Heart left ventricle (tissue), 16 donors: ENCODE measurements at regions of chr19 and their contacts with region 1.

Region 1: GRCh38 chr19:16111160-16111908 is at the start of gene RAB8A:
- DNase-seq: peak; percentile 99 to 100 (median 99)
- ATAC-seq: peak; percentile 98 to 99 (median 98)
- H3K4me3 ChIP-seq: peak within 1 kb of the TSS; percentile 73 to 99 (median 83)
- H3K27ac ChIP-seq: peak within 1 kb of the TSS in 11 of 12 donors; percentile 81 to 97 (median 89)
- H3K4me1 ChIP-seq: peaks cover 4 to 49% (median 29%) of the 10 kb centered on the region in 12 donors
- H3K27me3 ChIP-seq: no peaks in the 10 kb centered on the region
- CTCF ChIP-seq: peak; percentile 93 to 99 (median 98)
- POLR2A ChIP-seq: no peak
- total RNA-seq, gene RAB8A: 10.9 to 53.7 (median 23.7) TPM

Region 2: GRCh38 chr19:16076154-16076957 is 35.0 kb before region 1 on chr19 and contains the start of gene TPM4:
- intact Hi-C with region 1: loop called in 4 of 10 experiments (anchors 5 kb)
- DNase-seq: peak; percentile 92 to 97 (median 95)
- ATAC-seq: peak; percentile 85 to 91 (median 87)
- H3K4me3 ChIP-seq: peak within 1 kb of the TSS; percentile 79 to 99 (median 96)
- H3K27ac ChIP-seq: peak within 1 kb of the TSS; percentile 97 to 100 (median 100)
- H3K4me1 ChIP-seq: peaks cover 0 to 57% (median 33%) of the 10 kb centered on the region in 12 donors
- H3K27me3 ChIP-seq: peaks cover 0 to 6% (median 0%) of the 10 kb centered on the region in 9 donors
- CTCF ChIP-seq: no peak
- POLR2A ChIP-seq: peak; percentile 76 to 81
- total RNA-seq, gene TPM4: 49.2 to 260 (median 92.1) TPM

Region 3: GRCh38 chr19:16153582-16154336 is 42.4 kb after region 1 on chr19:
- intact Hi-C with region 1: no loop called
- DNase-seq: no peak
- ATAC-seq: no peak
- H3K4me3 ChIP-seq: no peak overlapping the region
- H3K27ac ChIP-seq: no peak overlapping the region
- H3K4me1 ChIP-seq: peaks cover 0 to 24% (median 0%) of the 10 kb centered on the region in 12 donors
- H3K27me3 ChIP-seq: peaks cover 0 to 11% (median 0%) of the 10 kb centered on the region in 9 donors
- CTCF ChIP-seq: no peak
- POLR2A ChIP-seq: no peak

Region 4: DNA sequence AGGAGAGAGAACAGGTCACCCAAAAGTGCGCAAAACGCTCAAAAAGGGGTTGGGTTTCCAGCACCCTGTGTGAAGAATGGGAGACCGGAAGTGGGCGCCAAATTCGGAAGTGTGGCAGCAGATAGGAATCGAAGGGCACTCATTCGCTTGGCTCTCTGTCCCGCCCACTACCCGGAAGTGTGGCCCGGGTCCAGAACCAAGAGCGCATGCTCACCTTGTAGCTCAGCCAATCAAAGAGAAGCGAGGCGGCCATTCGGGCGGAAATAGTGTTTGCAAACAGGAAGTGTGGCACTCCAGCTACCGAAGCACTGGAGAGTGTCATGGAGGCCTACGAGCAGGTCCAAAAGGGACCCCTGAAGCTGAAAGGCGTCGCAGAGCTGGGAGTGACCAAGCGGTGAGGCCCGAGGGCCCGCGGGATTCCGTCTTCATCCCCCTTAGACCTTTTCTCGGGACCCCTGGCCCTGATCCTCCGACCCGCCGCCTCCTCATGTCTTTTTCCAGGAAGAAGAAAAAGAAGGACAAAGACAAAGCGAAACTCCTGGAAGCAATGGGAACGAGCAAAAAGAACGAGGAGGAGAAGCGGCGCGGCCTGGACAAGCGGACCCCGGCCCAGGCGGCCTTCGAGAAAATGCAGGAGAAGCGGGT is 73.9 kb after region 1 on chr19 and contains the start of gene FAM32A:
- intact Hi-C with region 1: loop called in 6 of 10 experiments (anchors 2 to 5 kb)
- DNase-seq: peak; percentile 99
- ATAC-seq: peak; percentile 94 to 99 (median 98)
- H3K4me3 ChIP-seq: peak within 1 kb of the TSS; percentile 66 to 99 (median 91)
- H3K27ac ChIP-seq: peak within 1 kb of the TSS; percentile 72 to 92 (median 82)
- H3K4me1 ChIP-seq: peaks cover 3 to 41% (median 16%) of the 10 kb centered on the region in 12 donors
- H3K27me3 ChIP-seq: peaks cover 0 to 9% (median 0%) of the 10 kb centered on the region in 9 donors
- CTCF ChIP-seq: peak in 10 of 12 donors; percentile 7 to 51 (median 25)
- POLR2A ChIP-seq: peak in 1 of 2 donors; percentile 74
- total RNA-seq, gene FAM32A: 32.0 to 71.8 (median 37.5) TPM

Region 5: DNA sequence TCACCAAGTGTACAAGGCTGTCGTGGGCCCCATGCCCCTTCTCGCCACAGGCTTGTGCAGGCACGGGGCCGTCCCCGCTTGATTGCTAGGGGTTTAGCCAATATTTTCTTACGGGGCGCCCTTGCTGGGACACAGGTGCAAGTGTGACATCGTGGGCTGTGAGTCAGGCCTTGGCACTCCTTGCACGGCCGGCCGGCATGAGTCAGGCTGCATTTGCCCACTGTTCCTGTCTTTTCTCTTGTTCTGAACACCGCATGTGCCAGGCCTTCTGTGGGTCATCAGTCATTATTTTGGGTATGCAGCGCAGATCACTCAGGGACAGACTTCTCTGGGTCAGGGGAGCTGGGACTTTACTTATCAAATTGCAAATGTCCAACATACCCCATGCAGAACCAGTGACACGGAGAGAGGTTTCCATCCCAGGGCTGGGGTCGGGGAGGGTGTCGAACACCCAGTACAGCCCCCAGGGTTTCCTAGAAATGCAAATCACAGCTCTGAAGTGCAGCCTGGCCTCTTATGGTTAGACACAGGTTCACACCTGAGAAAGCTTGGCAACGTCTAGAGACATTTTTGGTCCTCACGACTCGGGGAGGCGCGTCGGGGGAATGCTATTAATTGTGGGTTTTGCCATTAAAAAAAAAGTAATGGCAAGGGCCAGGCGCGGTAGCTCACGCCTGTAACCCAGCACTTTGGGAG is 190.8 kb after region 1 on chr19:
- intact Hi-C with region 1: no loop called
- DNase-seq: no peak
- ATAC-seq: no peak
- H3K4me3 ChIP-seq: no peak overlapping the region
- H3K27ac ChIP-seq: no peak overlapping the region
- H3K4me1 ChIP-seq: peaks cover 0 to 17% (median 0%) of the 10 kb centered on the region in 12 donors
- H3K27me3 ChIP-seq: no peaks in the 10 kb centered on the region
- CTCF ChIP-seq: no peak
- POLR2A ChIP-seq: no peak